ENCODE measurements at regions of chr14 and their contacts with region 1.

Region 1: DNA sequence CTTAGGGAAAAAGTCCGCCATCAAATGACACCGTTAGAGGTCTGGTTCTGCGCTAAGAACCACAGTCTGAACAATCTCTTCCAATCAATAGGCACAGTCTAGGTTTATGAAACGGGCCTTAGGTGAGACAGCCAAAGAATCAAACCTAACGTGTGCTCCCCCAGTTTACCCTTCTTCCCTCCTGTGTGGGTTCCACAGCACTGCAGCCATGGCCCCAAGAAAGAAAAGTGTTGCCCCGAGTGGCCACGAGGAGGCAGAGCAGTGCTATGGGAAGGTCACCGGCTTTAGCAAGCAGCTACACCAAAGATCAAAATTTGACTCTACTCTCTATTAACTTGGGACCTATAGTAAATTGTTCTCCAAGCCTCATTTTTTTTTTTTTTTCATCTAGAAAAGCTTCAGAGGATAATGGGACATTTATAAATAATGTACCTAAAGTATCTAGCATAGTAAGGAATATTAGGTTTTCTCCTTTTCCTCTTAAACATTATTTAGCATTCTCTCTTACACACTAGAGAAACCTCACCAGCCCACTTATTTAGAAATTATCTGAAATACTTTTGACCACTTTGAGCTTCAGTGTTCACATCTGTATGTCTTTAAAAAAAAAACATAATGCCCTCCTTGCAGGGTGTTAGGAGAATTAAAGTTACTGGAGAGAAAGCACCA is 70.2 kb upstream of the GPHB5 start:
- DNase-seq: peak; percentile 57 to 66
- ATAC-seq: peak; percentile 79 to 88 (median 83)
- H3K4me3 ChIP-seq: no peak overlapping the region
- H3K4me3 Mint-ChIP-seq: no peak overlapping the region
- H3K27ac ChIP-seq: no peak overlapping the region
- H3K27ac Mint-ChIP-seq: peak overlapping the region; percentile 44 to 67
- H3K4me1 ChIP-seq: peaks cover 8% of the 10 kb centered on the region
- H3K4me1 Mint-ChIP-seq: peaks cover 26 to 29% of the 10 kb centered on the region in 2 donors
- H3K27me3 ChIP-seq: no peaks in the 10 kb centered on the region
- H3K27me3 Mint-ChIP-seq: no peaks in the 10 kb centered on the region
- CTCF ChIP-seq: peak; percentile 78

Region 2: GRCh38 chr14:63155511-63156189 is 233.2 kb before region 1 on chr14:
- intact Hi-C with region 1: no loop called
- DNase-seq: no peak
- ATAC-seq: no peak
- H3K4me3 ChIP-seq: no peak overlapping the region
- H3K4me3 Mint-ChIP-seq: no peak overlapping the region
- H3K27ac ChIP-seq: no peak overlapping the region
- H3K27ac Mint-ChIP-seq: no peak overlapping the region
- H3K4me1 ChIP-seq: no peaks in the 10 kb centered on the region
- H3K4me1 Mint-ChIP-seq: no peaks in the 10 kb centered on the region
- H3K27me3 ChIP-seq: no peaks in the 10 kb centered on the region
- H3K27me3 Mint-ChIP-seq: peaks cover 0 to 11% of the 10 kb centered on the region in 2 donors
- CTCF ChIP-seq: no peak

Region 3: GRCh38 chr14:63632932-63633514 is 244.1 kb after region 1 on chr14:
- intact Hi-C with region 1: loop called (anchors 1 kb)
- DNase-seq: peak in 1 of 2 donors; percentile 70
- ATAC-seq: peak; percentile 79 to 97 (median 89)
- H3K4me3 ChIP-seq: no peak overlapping the region
- H3K4me3 Mint-ChIP-seq: no peak overlapping the region
- H3K27ac ChIP-seq: no peak overlapping the region
- H3K27ac Mint-ChIP-seq: peak overlapping the region in 1 of 2 donors; percentile 9
- H3K4me1 ChIP-seq: no peaks in the 10 kb centered on the region
- H3K4me1 Mint-ChIP-seq: peaks cover 32 to 34% of the 10 kb centered on the region in 2 donors
- H3K27me3 ChIP-seq: no peaks in the 10 kb centered on the region
- H3K27me3 Mint-ChIP-seq: no peaks in the 10 kb centered on the region
- CTCF ChIP-seq: peak; percentile 82

Region 4: DNA sequence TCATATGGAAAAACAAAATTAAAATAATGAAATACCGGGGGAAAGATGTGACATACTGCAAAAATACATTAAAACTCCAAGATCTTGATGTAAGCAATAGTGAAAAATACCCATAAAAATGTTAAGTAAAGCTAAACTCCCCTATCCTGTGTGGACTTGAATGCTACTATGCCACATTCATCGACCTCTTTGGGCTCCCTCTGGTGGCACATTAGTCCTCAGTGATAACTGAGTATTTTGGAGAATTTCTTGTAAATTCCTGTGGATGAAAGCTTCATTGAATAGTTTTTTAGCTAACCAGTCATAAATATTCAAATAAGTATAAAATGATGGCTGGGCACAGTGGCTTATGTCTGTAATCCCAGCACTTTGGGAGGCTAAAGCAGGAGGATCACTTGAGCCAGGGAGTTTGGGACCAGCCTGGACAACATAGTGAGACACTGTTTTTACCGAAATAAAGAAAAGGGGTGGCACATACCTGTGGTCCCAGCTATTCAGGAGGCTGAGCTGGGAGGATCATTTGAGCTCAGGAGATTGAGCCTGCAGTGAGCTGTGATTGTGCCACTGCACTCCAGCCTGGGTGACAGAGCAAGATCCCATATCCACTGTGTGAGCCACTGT is 381.4 kb after region 1 on chr14:
- intact Hi-C with region 1: loop called (anchors 1 kb)
- DNase-seq: peak; percentile 23 to 83
- ATAC-seq: peak; percentile 79 to 90 (median 89)
- H3K4me3 ChIP-seq: no peak overlapping the region
- H3K4me3 Mint-ChIP-seq: no peak overlapping the region
- H3K27ac ChIP-seq: no peak overlapping the region
- H3K27ac Mint-ChIP-seq: no peak overlapping the region
- H3K4me1 ChIP-seq: no peaks in the 10 kb centered on the region
- H3K4me1 Mint-ChIP-seq: no peaks in the 10 kb centered on the region
- H3K27me3 ChIP-seq: no peaks in the 10 kb centered on the region
- H3K27me3 Mint-ChIP-seq: no peaks in the 10 kb centered on the region
- CTCF ChIP-seq: peak; percentile 80

Region 5: GRCh38 chr14:64303471-64303917 is 914.6 kb after region 1 on chr14:
- intact Hi-C with region 1: loop called (anchors 10 kb)
- DNase-seq: peak in 1 of 2 donors; percentile 67
- ATAC-seq: peak; percentile 71 to 81 (median 76)
- H3K4me3 ChIP-seq: no peak overlapping the region
- H3K4me3 Mint-ChIP-seq: no peak overlapping the region
- H3K27ac ChIP-seq: no peak overlapping the region
- H3K27ac Mint-ChIP-seq: no peak overlapping the region
- H3K4me1 ChIP-seq: no peaks in the 10 kb centered on the region
- H3K4me1 Mint-ChIP-seq: peaks cover 0 to 5% of the 10 kb centered on the region in 2 donors
- H3K27me3 ChIP-seq: no peaks in the 10 kb centered on the region
- H3K27me3 Mint-ChIP-seq: peaks cover 8 to 13% of the 10 kb centered on the region in 2 donors
- CTCF ChIP-seq: peak; percentile 88

Measured in natural killer cell (primary cell).